Right cardiac atrium (tissue), 5 donors: ENCODE measurements at regions of chr7 and their contacts with region 1.

Region 1: DNA sequence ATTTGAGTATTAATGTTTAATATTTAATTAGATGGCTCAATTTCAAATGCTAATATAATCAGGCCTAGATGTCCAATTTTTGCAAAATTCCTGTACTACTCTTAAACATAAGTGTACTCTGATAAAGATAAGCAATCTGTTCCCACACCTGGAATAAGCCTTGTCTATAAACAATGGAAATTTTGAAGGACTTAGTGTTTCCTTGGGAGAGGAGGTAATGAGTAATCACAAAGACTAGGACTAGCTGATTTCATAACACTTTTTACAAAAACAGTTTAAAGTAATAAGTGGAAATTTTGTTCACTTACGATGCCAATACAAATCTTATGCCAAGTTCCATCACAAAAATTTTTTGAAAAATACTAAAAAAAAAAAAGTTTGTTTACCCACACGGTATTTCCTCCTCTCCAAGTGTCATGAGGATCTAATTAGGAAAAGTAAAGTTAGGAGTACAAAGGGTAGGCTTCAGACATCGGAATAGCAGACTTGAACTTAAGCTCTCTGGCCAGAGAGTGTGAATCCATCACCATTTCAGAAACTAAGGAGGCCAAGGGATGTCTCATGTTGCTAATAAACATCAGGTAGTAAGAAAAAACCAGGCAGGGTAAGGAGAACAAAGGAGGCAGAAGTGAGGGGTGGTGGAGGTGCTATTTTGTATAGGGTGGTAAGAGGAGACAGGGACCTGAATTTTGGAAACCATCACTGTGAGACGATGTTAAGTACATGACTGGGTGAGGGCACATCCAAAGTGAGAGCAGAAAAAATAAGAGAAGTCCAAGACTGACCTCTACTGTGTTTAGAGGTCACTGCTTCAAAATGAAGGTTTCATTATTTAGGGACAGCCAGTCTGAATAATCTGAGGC is 61.3 kb downstream of the RAPGEF5 start:
- DNase-seq: no peak
- ATAC-seq: peak; percentile 57 to 75
- H3K4me3 ChIP-seq: no peak overlapping the region
- H3K27ac ChIP-seq: no peak overlapping the region
- H3K4me1 ChIP-seq: no peaks in the 10 kb centered on the region
- H3K27me3 ChIP-seq: no peaks in the 10 kb centered on the region

Region 2: DNA sequence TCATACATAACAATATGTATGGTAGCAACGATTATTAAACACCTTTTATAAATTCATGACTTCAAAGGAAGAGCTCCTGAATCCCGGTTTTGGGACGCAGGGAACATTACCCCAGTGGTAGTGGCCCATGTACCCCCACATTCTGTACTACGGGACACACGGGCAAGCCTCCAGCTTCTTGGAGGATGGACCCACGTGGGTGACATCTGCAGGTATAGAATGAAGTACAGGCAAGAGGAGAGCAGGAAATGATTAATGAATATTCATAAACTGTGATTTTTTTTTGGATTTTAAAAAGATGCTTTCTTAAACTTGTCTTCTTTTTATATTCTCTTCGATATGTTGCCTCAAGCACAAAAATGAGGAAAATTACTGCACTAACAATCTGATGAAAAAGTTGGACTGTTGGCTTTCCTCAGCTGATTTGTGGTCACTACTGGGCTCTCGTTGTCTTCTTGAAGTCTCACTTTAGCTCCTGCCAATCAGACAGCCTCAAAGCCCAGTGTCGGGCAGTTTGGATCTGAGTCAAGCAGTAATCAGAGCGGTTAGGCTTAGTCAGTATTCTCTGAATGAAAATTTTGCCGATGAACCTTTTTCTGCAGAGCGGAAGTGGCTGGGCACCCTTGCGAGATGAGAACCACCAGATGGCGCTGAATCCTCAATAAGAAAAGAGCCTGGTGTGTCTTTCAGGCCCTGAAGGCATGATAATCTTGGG is 192.2 kb before region 1 on chr7:
- intact Hi-C with region 1: loop called in 1 of 4 experiments (anchors 10 kb)
- DNase-seq: peak; percentile 56 to 77 (median 69)
- ATAC-seq: peak; percentile 74 to 78
- H3K4me3 ChIP-seq: no peak overlapping the region
- H3K27ac ChIP-seq: no peak overlapping the region
- H3K4me1 ChIP-seq: no peaks in the 10 kb centered on the region
- H3K27me3 ChIP-seq: no peaks in the 10 kb centered on the region

Region 3: DNA sequence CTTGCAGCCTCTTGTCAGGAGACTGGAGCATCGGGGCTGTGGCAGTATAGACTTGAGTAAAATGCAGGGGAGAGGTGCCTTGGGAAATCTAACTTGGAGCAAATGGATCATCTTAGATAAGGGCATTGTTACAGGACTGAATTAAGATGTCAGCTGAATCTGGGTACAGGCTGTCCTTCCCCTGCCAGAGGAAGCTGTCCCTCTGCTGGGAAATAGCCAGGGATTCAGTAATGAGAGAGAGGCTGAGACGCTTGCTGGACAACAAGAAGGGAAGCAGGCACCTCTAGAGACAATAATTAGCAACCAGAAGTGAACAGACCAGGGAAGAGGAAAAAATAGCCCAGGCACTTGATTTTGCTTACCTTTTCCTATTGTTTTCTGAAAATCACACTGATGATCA is 82.1 kb after region 1 on chr7:
- intact Hi-C with region 1: no loop called
- DNase-seq: no peak
- ATAC-seq: peak; percentile 41 to 76
- H3K4me3 ChIP-seq: no peak overlapping the region
- H3K27ac ChIP-seq: peak overlapping the region; percentile 14
- H3K4me1 ChIP-seq: peaks cover 2% of the 10 kb centered on the region
- H3K27me3 ChIP-seq: no peaks in the 10 kb centered on the region

Region 4: GRCh38 chr7:22469371-22470143 is 173.9 kb after region 1 on chr7:
- intact Hi-C with region 1: loop called in 1 of 4 experiments (anchors 10 kb)
- DNase-seq: no peak
- ATAC-seq: no peak
- H3K4me3 ChIP-seq: no peak overlapping the region
- H3K27ac ChIP-seq: no peak overlapping the region
- H3K4me1 ChIP-seq: no peaks in the 10 kb centered on the region
- H3K27me3 ChIP-seq: no peaks in the 10 kb centered on the region